Endothelial cell of umbilical vein (primary cell): ENCODE measurements at regions of chr20 and their contacts with region 1.

Region 1: GRCh38 chr20:8305449-8305978 is 173.4 kb downstream of the PLCB1 start:
- DNase-seq: peak; percentile 42
- H3K4me3 ChIP-seq: no peak overlapping the region
- H3K27ac ChIP-seq: no peak overlapping the region
- H3K4me1 ChIP-seq: no peaks in the 10 kb centered on the region
- H3K27me3 ChIP-seq: no peaks in the 10 kb centered on the region
- CTCF ChIP-seq: peak; percentile 67 to 79
- POLR2A ChIP-seq: no peak

Region 2: DNA sequence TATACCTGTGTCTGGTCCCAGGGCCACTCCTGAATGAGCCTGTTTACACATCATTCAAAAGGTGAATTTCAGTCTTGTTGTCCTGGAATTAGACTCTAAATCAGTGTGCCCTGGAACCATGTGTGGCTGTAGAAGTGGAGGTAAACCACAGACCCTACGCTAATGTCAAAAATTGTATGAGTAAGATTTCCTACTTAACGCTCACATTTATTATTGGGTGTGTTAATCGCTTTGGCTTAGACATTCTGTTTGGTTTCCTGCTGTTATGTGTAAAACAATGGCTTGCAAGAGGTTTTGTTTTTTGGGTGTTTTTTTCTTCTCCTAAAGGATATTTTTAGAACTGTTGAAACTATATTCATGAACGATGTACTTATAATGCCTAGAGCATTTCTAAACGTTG is 154.1 kb before region 1 on chr20:
- CTCF ChIA-PET with region 1: interaction called, 4 read pairs
- POLR2A ChIA-PET with region 1: no interaction called
- dilution Hi-C with region 1: no loop called
- intact Hi-C with region 1: loop called (anchors 1 kb)
- DNase-seq: peak; percentile 92
- H3K4me3 ChIP-seq: peak overlapping the region in 1 of 3 experiments; percentile 46
- H3K27ac ChIP-seq: peak overlapping the region; percentile 71
- H3K4me1 ChIP-seq: peaks cover 98% of the 10 kb centered on the region
- H3K27me3 ChIP-seq: no peaks in the 10 kb centered on the region
- CTCF ChIP-seq: no peak
- POLR2A ChIP-seq: peak; percentile 46